ENCODE measurements at regions of chr12 and their contacts with region 1.

Region 1: GRCh38 chr12:46499901-46500300 is 127.3 kb upstream of the SLC38A2 start:
- DNase-seq: no peak
- ATAC-seq: no peak
- H3K4me3 ChIP-seq: no peak overlapping the region
- H3K4me3 Mint-ChIP-seq: no peak overlapping the region
- H3K27ac ChIP-seq: no peak overlapping the region
- H3K27ac Mint-ChIP-seq: no peak overlapping the region
- H3K4me1 ChIP-seq: no peaks in the 10 kb centered on the region
- H3K4me1 Mint-ChIP-seq: peaks cover 1% of the 10 kb centered on the region
- H3K27me3 ChIP-seq: no peaks in the 10 kb centered on the region
- H3K27me3 Mint-ChIP-seq: no peaks in the 10 kb centered on the region
- CTCF ChIP-seq: no peak

Region 2: DNA sequence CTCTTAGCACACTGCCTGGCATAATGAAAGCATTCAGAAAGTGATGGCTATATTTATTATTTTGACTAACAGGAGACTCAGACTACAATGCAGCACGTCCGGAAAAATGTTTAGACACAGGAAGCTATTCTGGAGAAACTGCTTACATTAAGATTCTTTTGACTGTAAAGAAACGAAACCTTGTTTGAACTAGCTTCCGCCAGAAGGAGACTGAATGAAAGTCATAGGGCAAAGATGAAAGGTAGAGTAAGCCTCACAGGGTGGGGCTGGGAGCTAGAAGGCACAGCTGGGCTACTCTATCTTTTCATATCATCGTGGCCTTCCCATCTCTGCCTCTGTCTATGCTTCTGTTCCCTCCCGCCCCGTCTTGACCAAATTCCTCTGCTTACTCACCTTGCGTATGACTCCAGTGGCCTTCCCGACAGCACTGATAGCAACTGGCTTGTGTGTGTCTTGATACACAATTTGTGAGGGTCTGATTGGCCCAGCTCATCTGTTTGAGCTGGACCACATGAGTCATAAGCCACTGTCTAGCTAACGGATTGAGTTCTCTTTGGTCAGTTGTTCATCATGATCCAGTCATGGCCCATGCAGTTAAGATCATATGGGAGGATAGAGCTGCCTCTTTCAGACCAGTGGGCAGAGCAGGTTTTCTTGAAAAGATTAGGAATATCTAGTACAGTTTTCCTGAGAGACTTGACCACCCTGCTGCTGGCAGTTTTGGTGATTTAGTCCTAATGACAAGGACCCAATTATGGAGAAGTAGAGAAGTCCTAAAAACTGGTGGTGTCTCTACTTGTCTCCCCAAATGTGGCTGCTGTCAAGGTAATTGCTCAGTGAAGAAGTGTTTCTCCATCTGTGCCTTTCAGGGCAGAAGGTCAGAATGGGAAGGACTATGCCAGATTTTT is 24.2 kb after region 1 on chr12:
- CTCF ChIA-PET with region 1: no interaction called
- POLR2A ChIA-PET with region 1: no interaction called
- intact Hi-C with region 1: no loop called
- DNase-seq: no peak
- ATAC-seq: no peak
- H3K4me3 ChIP-seq: no peak overlapping the region
- H3K4me3 Mint-ChIP-seq: no peak overlapping the region
- H3K27ac ChIP-seq: no peak overlapping the region
- H3K27ac Mint-ChIP-seq: peak overlapping the region; percentile 32
- H3K4me1 ChIP-seq: no peaks in the 10 kb centered on the region
- H3K4me1 Mint-ChIP-seq: peaks cover under 1% of the 10 kb centered on the region
- H3K27me3 ChIP-seq: no peaks in the 10 kb centered on the region
- H3K27me3 Mint-ChIP-seq: no peaks in the 10 kb centered on the region
- CTCF ChIP-seq: no peak

Region 3: DNA sequence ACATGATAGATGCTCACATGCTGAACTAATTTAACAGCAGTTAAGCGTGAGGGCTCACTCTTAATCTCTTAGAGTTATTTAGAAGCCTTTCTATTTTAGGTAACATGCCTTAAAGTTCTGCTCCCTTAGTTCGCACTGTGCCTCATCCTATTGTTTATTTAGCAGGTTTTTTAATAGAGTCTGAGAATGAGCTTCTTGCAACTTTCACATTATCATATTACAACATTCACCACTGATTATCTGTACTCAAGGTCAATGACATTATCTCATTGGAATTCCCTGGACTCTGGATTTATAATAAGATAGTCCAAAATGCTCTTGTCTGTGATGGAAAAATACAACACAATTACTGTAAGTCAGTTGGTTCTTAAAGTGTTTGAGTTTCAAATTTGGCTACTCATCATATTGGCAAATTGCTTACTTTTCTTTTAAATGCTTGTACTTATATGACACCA is 56.2 kb after region 1 on chr12:
- CTCF ChIA-PET with region 1: no interaction called
- POLR2A ChIA-PET with region 1: no interaction called
- intact Hi-C with region 1: loop called (anchors 10 kb)
- DNase-seq: no peak
- ATAC-seq: no peak
- H3K4me3 ChIP-seq: no peak overlapping the region
- H3K4me3 Mint-ChIP-seq: no peak overlapping the region
- H3K27ac ChIP-seq: no peak overlapping the region
- H3K27ac Mint-ChIP-seq: no peak overlapping the region
- H3K4me1 ChIP-seq: no peaks in the 10 kb centered on the region
- H3K4me1 Mint-ChIP-seq: no peaks in the 10 kb centered on the region
- H3K27me3 ChIP-seq: no peaks in the 10 kb centered on the region
- H3K27me3 Mint-ChIP-seq: no peaks in the 10 kb centered on the region
- CTCF ChIP-seq: no peak